ENCODE measurements at regions of chr9 and their contacts with region 1.

Region 1: GRCh38 chr9:33159760-33160127 is 7.4 kb downstream of the B4GALT1 start:
- DNase-seq: peak; percentile 87
- H3K4me3 Mint-ChIP-seq: peak overlapping the region; percentile 64
- H3K27ac Mint-ChIP-seq: peak overlapping the region; percentile 97
- H3K4me1 Mint-ChIP-seq: peaks cover 92% of the 10 kb centered on the region
- H3K27me3 Mint-ChIP-seq: no peaks in the 10 kb centered on the region

Region 2: DNA sequence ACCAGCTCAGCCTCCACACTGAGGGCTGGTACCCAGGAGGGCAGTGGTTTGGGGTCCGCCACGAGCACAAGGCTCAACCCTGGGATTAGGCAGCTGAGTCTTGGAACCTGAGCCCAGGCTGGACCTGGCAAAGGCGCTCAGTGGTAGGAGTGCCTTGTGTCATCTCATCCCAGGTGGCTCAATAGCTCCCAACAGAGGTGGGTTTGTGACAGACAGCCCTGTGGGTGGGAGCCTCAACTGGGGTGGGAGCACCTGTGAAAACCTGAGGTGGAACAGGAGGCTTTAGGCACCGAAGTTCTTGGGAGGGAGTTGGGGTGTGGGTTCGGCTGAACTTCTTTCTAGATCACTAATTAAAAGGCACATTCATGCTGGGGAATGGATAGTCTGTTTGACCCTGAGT is 48.1 kb before region 1 on chr9:
- CTCF ChIA-PET with region 1: no interaction called
- intact Hi-C with region 1: loop called (anchors 1 kb)
- DNase-seq: no peak
- H3K4me3 Mint-ChIP-seq: no peak overlapping the region
- H3K27ac Mint-ChIP-seq: peak overlapping the region; percentile 9
- H3K4me1 Mint-ChIP-seq: peaks cover 11% of the 10 kb centered on the region
- H3K27me3 Mint-ChIP-seq: no peaks in the 10 kb centered on the region

Region 3: DNA sequence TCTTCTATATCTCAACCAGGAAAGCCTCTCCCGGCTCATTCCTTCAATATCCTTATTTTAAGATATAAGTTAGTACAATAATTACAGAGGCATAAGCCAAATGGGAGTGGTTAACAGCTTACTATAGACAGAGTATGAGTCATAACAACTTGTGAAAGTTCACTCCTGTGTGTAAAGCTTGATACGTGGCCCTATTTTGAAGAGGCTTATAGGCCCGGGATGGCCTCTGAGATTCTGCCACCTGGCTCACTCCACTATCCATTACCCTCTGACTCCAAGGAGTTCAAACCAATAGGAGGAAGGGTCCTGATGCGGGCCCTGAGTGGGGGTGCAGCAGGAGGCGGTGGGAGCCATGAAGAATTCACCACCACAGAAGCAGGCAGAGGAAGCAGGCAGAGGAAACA is 29.2 kb before region 1 on chr9:
- CTCF ChIA-PET with region 1: no interaction called
- intact Hi-C with region 1: loop called (anchors 1 kb)
- DNase-seq: peak; percentile 45
- H3K4me3 Mint-ChIP-seq: no peak overlapping the region
- H3K27ac Mint-ChIP-seq: peak overlapping the region; percentile 78
- H3K4me1 Mint-ChIP-seq: peaks cover 28% of the 10 kb centered on the region
- H3K27me3 Mint-ChIP-seq: no peaks in the 10 kb centered on the region

Region 4: GRCh38 chr9:33143241-33143661 is 16.5 kb before region 1 on chr9:
- CTCF ChIA-PET with region 1: interaction called, 7 read pairs
- intact Hi-C with region 1: loop called (anchors 1 kb)
- DNase-seq: peak; percentile 30
- H3K4me3 Mint-ChIP-seq: no peak overlapping the region
- H3K27ac Mint-ChIP-seq: peak overlapping the region; percentile 34
- H3K4me1 Mint-ChIP-seq: peaks cover 89% of the 10 kb centered on the region
- H3K27me3 Mint-ChIP-seq: no peaks in the 10 kb centered on the region

Region 5: DNA sequence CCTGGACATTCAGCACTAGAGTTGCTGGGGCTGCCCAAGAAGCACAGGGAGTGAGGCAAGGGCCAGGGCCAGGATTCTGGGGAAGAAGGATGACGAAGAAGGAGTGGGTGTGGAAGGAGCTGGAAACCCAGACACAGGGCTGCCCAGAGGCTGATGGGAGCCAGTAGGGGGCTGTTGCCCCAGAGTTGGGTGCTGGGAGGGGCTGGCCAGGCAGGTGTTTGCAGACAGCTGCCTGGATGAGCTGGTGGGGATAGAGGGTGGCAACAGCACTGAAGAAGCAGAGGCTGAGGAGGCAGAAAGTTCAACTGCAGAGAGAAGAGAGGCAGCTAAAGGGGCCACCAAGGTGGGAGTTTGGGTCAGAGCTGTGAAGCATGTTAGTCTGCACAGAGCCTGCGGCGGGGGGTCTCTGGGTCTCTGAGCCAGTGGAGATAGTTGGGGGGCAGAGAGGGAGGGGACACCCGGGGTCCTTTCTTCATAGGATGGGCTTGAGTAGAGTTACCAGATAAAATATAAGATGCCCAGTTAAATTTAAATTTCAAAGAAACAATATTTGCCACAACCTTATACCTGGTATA is 245.1 kb after region 1 on chr9:
- CTCF ChIA-PET with region 1: no interaction called
- intact Hi-C with region 1: no loop called
- DNase-seq: no peak
- H3K4me3 Mint-ChIP-seq: no peak overlapping the region
- H3K27ac Mint-ChIP-seq: no peak overlapping the region
- H3K4me1 Mint-ChIP-seq: no peaks in the 10 kb centered on the region
- H3K27me3 Mint-ChIP-seq: no peaks in the 10 kb centered on the region

Region 6: GRCh38 chr9:33430942-33431341 is 271.2 kb after region 1 on chr9:
- CTCF ChIA-PET with region 1: no interaction called
- intact Hi-C with region 1: no loop called
- DNase-seq: no peak
- H3K4me3 Mint-ChIP-seq: no peak overlapping the region
- H3K27ac Mint-ChIP-seq: no peak overlapping the region
- H3K4me1 Mint-ChIP-seq: peaks cover 2% of the 10 kb centered on the region
- H3K27me3 Mint-ChIP-seq: no peaks in the 10 kb centered on the region

Measured in activated naive CD4-positive, alpha-beta T cell treated with anti-CD3 and anti-CD28 coated beads for 36 hours (primary cell).